Left cardiac atrium (tissue), 4 donors: ENCODE measurements at regions of chr3 and their contacts with region 1.

Region 1: DNA sequence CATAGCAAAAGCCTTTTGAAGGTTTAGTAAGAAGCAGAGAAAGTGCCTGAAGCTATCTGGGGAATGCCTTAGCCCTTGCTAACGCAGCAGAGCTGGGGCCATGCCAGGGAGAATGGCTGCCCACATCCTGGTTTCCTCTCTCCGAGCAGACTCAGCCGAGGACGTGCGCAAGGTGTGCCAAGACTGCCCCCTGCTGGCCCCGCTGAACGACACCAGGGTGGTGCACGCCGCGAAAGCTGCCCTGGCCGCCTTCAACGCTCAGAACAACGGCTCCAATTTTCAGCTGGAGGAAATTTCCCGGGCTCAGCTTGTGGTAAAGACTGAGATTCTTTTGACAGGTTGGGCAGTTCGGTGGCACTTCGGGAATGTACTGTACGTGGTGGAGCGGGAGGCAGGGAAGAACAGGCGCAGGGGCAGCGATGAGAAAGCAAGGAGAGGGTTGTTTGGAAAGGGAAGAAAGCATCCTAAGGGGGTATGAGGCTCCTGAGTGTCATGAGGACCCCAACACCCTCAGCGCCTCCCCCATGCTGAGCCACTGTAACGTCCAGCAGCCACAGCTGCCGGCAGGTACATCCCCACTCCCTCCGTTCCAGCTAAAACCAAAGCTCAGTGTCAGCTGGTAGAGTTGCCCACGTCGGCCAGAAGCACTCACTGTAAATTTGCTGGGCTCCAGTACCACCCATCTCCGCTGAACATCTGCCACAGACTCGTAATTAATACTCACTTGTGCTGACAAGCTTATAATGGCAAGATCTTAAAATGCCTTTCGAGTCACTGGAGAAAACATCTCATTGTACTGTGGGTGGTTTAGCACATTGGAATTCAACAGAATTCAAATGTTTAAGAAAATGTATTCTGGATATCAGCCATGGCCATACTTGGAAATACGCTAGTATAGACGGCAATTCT is 4.4 kb downstream of the AHSG start:
- DNase-seq: peak; percentile 91
- ATAC-seq: peak; percentile 97 to 98

Region 2: GRCh38 chr3:186406669-186407635 is 210.3 kb before region 1 on chr3:
- intact Hi-C with region 1: no loop called
- DNase-seq: peak; percentile 68
- ATAC-seq: peak; percentile 93 to 96

Region 3: DNA sequence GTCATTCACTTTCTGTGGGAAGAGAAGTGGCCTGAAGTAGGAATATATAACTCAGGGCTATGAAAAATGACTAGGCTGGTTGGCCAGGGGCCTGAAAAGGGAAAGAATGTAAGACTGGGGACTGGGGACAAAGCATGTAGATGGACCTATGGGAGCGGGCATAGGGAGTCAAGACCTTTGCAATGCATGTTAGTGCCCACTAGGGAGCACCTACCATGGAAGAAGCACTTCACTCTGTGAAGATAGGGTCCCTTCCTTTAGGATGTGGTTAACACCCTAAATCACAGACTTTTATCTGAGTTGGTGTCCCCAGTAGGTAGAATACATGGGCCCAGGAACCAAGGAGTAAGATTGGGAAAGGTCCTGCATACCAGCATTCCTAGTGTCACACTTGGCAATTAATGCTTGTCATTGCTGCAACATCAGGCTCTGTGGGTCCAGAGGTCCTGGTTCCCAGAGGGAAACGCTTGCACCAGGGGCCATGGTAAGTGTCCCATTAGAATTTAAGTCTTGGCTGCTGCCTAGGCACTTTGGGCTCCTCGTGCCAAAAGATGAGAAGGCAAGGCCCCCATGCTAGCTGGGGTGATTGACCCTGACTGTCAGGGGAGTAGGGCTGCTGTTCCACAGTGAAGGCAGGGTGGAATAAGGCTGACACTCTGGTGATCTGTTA is 152.7 kb before region 1 on chr3:
- intact Hi-C with region 1: no loop called
- DNase-seq: no peak
- ATAC-seq: no peak

Region 4: GRCh38 chr3:186754006-186754405 is 136.7 kb after region 1 on chr3:
- intact Hi-C with region 1: loop called (anchors 2 to 10 kb)
- DNase-seq: no peak
- ATAC-seq: no peak

Region 5: DNA sequence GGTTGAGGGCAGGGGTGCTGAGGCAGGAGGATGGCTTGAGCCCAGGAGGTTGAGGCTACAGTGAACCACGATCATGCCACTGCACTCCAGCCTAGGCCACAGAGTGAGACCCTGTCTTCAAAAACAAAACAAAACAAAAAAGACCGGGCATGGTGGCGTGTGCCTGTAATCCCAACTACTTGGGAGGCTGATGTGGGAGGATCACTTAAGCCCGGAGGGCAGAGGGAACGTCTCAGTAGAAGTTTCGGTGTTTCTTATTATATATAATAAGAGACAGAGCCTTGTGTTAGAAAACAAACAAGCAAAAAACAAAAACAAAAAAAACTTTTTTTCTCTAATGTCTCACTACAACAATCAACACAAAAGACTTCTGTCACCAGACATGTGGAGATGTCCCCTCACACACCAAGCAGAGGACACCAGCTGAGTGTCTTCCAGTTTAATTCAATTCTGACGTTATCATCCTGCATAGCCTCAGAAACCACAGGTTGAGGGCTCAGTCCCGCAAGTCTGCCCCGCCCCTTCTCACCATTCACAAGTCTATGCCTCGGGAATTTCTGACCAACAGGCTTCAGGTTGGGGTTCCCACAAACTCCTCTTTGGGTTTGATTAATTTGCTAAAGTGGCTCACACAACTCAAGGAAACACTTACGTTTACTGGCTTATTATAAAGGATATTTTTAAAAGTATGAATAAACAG is 142.1 kb after region 1 on chr3:
- intact Hi-C with region 1: loop called in 1 of 2 experiments (anchors 10 kb)
- DNase-seq: no peak
- ATAC-seq: no peak

Region 6: GRCh38 chr3:186815435-186815834 is 198.1 kb after region 1 on chr3:
- intact Hi-C with region 1: loop called (anchors 5 to 10 kb)
- DNase-seq: no peak
- ATAC-seq: no peak

Region 7: GRCh38 chr3:186839874-186840641 is 222.8 kb after region 1 on chr3:
- intact Hi-C with region 1: no loop called
- DNase-seq: no peak
- ATAC-seq: peak; percentile 47